CD4-positive, alpha-beta memory T cell (primary cell): ENCODE measurements at regions of chr11 and their contacts with region 1.

Region 1: GRCh38 chr11:112588252-112588694 is 327.6 kb upstream of the PLET1 start:
- DNase-seq: peak in 4 of 5 donors; percentile 38 to 52 (median 50)
- H3K4me3 ChIP-seq: no peak overlapping the region
- H3K4me3 Mint-ChIP-seq: peak overlapping the region in 2 of 8 donors; percentile 48 to 60
- H3K27ac ChIP-seq: no peak overlapping the region
- H3K27ac Mint-ChIP-seq: no peak overlapping the region
- H3K4me1 ChIP-seq: no peaks in the 10 kb centered on the region
- H3K4me1 Mint-ChIP-seq: peaks cover 0 to 6% (median 4%) of the 10 kb centered on the region in 4 donors
- H3K27me3 ChIP-seq: no peaks in the 10 kb centered on the region
- H3K27me3 Mint-ChIP-seq: no peaks in the 10 kb centered on the region

Region 2: DNA sequence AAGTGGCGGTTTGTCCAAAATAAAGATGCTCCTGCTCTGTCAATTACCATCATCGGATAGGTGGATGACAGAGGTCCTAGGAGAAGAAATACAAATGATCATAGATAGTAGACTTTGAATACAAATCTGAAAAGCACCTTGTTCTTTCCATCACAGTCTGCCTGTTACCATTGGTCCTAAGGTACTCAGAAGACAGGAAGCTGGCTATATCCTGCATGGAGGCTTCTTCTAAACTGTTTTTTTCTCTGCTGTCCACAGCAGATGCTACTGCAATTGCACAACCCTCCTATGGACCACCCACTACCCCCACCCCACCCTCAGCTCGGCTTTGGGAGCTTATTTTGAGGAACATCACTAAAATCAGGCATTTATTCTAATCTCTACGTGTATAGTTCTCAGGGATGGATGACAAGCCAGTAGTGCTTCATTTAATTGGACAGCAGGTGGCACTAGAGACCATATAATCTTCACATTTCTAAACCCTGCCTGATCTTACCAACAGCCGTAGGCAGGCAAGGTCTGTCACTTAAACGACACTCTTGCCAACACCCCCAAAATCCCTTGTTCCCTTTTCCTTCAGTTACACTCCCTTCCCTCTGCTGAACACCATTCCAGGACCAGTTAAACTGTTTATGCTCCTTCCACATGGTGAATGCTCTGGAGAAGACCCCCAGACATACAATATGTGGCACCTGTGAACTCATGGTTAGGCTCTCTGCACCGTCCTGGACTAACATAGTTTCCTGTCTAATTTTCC is 368.6 kb before region 1 on chr11:
- CTCF ChIA-PET with region 1: interaction called, 6 read pairs
- POLR2A ChIA-PET with region 1: no interaction called
- intact Hi-C with region 1: loop called (anchors 1 kb)
- DNase-seq: peak; percentile 66 to 73 (median 71)
- H3K4me3 ChIP-seq: no peak overlapping the region
- H3K4me3 Mint-ChIP-seq: peak overlapping the region in 1 of 8 donors; percentile 13
- H3K27ac ChIP-seq: no peak overlapping the region
- H3K27ac Mint-ChIP-seq: peak overlapping the region in 3 of 7 donors; percentile 36 to 62 (median 42)
- H3K4me1 ChIP-seq: no peaks in the 10 kb centered on the region
- H3K4me1 Mint-ChIP-seq: peaks cover 0 to 5% (median 4%) of the 10 kb centered on the region in 4 donors
- H3K27me3 ChIP-seq: no peaks in the 10 kb centered on the region
- H3K27me3 Mint-ChIP-seq: no peaks in the 10 kb centered on the region

Region 3: GRCh38 chr11:112555491-112556364 is 32.5 kb before region 1 on chr11:
- CTCF ChIA-PET with region 1: interaction called, 23 read pairs
- POLR2A ChIA-PET with region 1: interaction called, 3 read pairs
- intact Hi-C with region 1: no loop called
- DNase-seq: peak; percentile 56 to 64 (median 60)
- H3K4me3 ChIP-seq: no peak overlapping the region
- H3K4me3 Mint-ChIP-seq: peak overlapping the region in 4 of 8 donors; percentile 20 to 63 (median 54)
- H3K27ac ChIP-seq: no peak overlapping the region
- H3K27ac Mint-ChIP-seq: peak overlapping the region in 3 of 7 donors; percentile 76 to 86 (median 83)
- H3K4me1 ChIP-seq: no peaks in the 10 kb centered on the region
- H3K4me1 Mint-ChIP-seq: peaks cover 0 to 6% (median 2%) of the 10 kb centered on the region in 4 donors
- H3K27me3 ChIP-seq: no peaks in the 10 kb centered on the region
- H3K27me3 Mint-ChIP-seq: peaks cover 3 to 4% of the 10 kb centered on the region in 2 donors

Region 4: GRCh38 chr11:112570333-112570732 is 17.9 kb before region 1 on chr11:
- CTCF ChIA-PET with region 1: interaction called, 14 read pairs
- POLR2A ChIA-PET with region 1: no interaction called
- intact Hi-C with region 1: no loop called
- DNase-seq: no peak
- H3K4me3 ChIP-seq: no peak overlapping the region
- H3K4me3 Mint-ChIP-seq: no peak overlapping the region
- H3K27ac ChIP-seq: no peak overlapping the region
- H3K27ac Mint-ChIP-seq: no peak overlapping the region
- H3K4me1 ChIP-seq: no peaks in the 10 kb centered on the region
- H3K4me1 Mint-ChIP-seq: no peaks in the 10 kb centered on the region
- H3K27me3 ChIP-seq: no peaks in the 10 kb centered on the region
- H3K27me3 Mint-ChIP-seq: peaks cover 7 to 23% of the 10 kb centered on the region in 2 donors

Region 5: DNA sequence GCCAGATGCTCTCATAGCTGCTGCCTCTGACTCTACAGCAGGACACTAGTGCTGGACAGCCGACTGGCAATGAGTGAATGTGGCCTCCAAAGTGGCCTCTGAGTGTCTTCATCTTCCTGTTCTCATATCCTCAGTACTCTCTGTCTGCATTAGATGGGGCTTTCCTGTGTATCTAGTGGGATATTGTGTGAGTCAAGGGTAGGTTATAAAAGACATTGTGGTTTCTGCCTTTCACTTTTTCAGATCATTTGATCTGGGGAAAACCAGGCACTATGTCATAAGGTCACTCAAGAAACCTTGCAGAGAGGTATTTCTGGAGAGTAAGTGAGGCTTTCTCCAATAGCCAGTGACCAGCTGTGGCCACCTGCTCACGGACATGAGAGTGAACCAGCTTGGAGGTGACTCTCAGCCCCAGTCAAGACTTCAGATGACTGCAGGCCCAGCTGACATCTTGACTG is 39.3 kb after region 1 on chr11:
- CTCF ChIA-PET with region 1: no interaction called
- POLR2A ChIA-PET with region 1: no interaction called
- intact Hi-C with region 1: no loop called
- DNase-seq: no peak
- H3K4me3 ChIP-seq: no peak overlapping the region
- H3K4me3 Mint-ChIP-seq: no peak overlapping the region
- H3K27ac ChIP-seq: no peak overlapping the region
- H3K27ac Mint-ChIP-seq: no peak overlapping the region
- H3K4me1 ChIP-seq: no peaks in the 10 kb centered on the region
- H3K4me1 Mint-ChIP-seq: no peaks in the 10 kb centered on the region
- H3K27me3 ChIP-seq: no peaks in the 10 kb centered on the region
- H3K27me3 Mint-ChIP-seq: peaks cover 0 to 8% of the 10 kb centered on the region in 2 donors

Region 6: GRCh38 chr11:113289431-113290187 is 701.3 kb after region 1 on chr11:
- CTCF ChIA-PET with region 1: interaction called, 50 read pairs
- POLR2A ChIA-PET with region 1: interaction called, 4 read pairs
- intact Hi-C with region 1: loop called (anchors 1 kb)
- DNase-seq: peak; percentile 59 to 65 (median 62)
- H3K4me3 ChIP-seq: no peak overlapping the region
- H3K4me3 Mint-ChIP-seq: no peak overlapping the region
- H3K27ac ChIP-seq: no peak overlapping the region
- H3K27ac Mint-ChIP-seq: no peak overlapping the region
- H3K4me1 ChIP-seq: no peaks in the 10 kb centered on the region
- H3K4me1 Mint-ChIP-seq: no peaks in the 10 kb centered on the region
- H3K27me3 ChIP-seq: no peaks in the 10 kb centered on the region
- H3K27me3 Mint-ChIP-seq: peaks cover 4% of the 10 kb centered on the region in 2 donors